Caco-2 (cell line): ENCODE measurements at regions of chr6 and their contacts with region 1.

Region 1: GRCh38 chr6:108762394-108762793 is 85.8 kb upstream of the ARMC2 start:
- DNase-seq: no peak
- H3K4me3 ChIP-seq: no peak overlapping the region
- H3K4me3 Mint-ChIP-seq: no peak overlapping the region
- H3K27ac Mint-ChIP-seq: no peak overlapping the region
- H3K4me1 ChIP-seq: no peaks in the 10 kb centered on the region
- H3K4me1 Mint-ChIP-seq: peaks cover 10% of the 10 kb centered on the region
- H3K27me3 ChIP-seq: no peaks in the 10 kb centered on the region
- H3K27me3 Mint-ChIP-seq: no peaks in the 10 kb centered on the region
- CTCF ChIP-seq: no peak

Region 2: GRCh38 chr6:108651340-108652227 is 110.8 kb before region 1 on chr6:
- CTCF ChIA-PET with region 1: no interaction called
- POLR2A ChIA-PET with region 1: no interaction called
- intact Hi-C with region 1: no loop called
- DNase-seq: no peak
- H3K4me3 ChIP-seq: no peak overlapping the region
- H3K4me3 Mint-ChIP-seq: no peak overlapping the region
- H3K27ac Mint-ChIP-seq: no peak overlapping the region
- H3K4me1 ChIP-seq: no peaks in the 10 kb centered on the region
- H3K4me1 Mint-ChIP-seq: peaks cover 4% of the 10 kb centered on the region
- H3K27me3 ChIP-seq: no peaks in the 10 kb centered on the region
- H3K27me3 Mint-ChIP-seq: no peaks in the 10 kb centered on the region
- CTCF ChIP-seq: no peak

Region 3: GRCh38 chr6:108779536-108780275 is 17.3 kb after region 1 on chr6:
- CTCF ChIA-PET with region 1: no interaction called
- POLR2A ChIA-PET with region 1: no interaction called
- intact Hi-C with region 1: no loop called
- DNase-seq: no peak
- H3K4me3 ChIP-seq: no peak overlapping the region
- H3K4me3 Mint-ChIP-seq: no peak overlapping the region
- H3K27ac Mint-ChIP-seq: peak overlapping the region; percentile 77
- H3K4me1 ChIP-seq: 0 out of 2 replicates have a peak, but pooled peaks cover 7% of the 10 kb centered on the region
- H3K4me1 Mint-ChIP-seq: peaks cover 21% of the 10 kb centered on the region
- H3K27me3 ChIP-seq: no peaks in the 10 kb centered on the region
- H3K27me3 Mint-ChIP-seq: no peaks in the 10 kb centered on the region
- CTCF ChIP-seq: no peak

Region 4: DNA sequence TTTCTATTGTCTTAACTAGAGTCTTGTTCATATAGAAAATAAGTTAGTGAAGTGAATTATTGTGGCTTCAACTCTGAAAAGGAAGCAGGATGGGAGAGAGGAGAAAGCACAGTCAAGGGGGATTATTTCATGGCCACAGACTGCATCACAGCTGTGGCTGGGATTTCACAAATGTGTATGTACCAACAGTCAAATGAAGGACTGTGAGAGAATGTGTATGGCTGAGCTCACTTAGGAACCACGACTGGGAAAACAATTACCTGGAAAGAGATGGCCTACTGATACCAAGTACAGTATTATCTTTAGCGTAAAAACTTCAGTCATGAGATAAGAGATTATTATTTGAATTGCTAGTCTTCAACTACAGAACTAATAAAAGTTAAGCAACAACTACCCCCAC is 277.4 kb after region 1 on chr6:
- CTCF ChIA-PET with region 1: no interaction called
- POLR2A ChIA-PET with region 1: interaction called, 20 read pairs
- intact Hi-C with region 1: no loop called
- DNase-seq: peak; percentile 45 to 53
- H3K4me3 ChIP-seq: no peak overlapping the region
- H3K4me3 Mint-ChIP-seq: peak overlapping the region; percentile 34
- H3K27ac Mint-ChIP-seq: peak overlapping the region; percentile 41
- H3K4me1 ChIP-seq: peaks cover 41% of the 10 kb centered on the region
- H3K4me1 Mint-ChIP-seq: peaks cover 24% of the 10 kb centered on the region
- H3K27me3 ChIP-seq: no peaks in the 10 kb centered on the region
- H3K27me3 Mint-ChIP-seq: no peaks in the 10 kb centered on the region
- CTCF ChIP-seq: no peak